ENCODE measurements at regions of chr12 and their contacts with region 1.

Region 1: GRCh38 chr12:64181504-64182291 is 40.4 kb downstream of the KICS2 start:
- DNase-seq: peak; percentile 99
- ATAC-seq: peak; percentile 86
- H3K4me3 ChIP-seq: peak overlapping the region; percentile 10; the same call in 1 of the 2 replicates
- H3K27ac ChIP-seq: peak overlapping the region; percentile 98
- H3K4me1 ChIP-seq: peaks cover 24% of the 10 kb centered on the region
- H3K27me3 ChIP-seq: no peaks in the 10 kb centered on the region
- CTCF ChIP-seq: peak; percentile 61
- POLR2A ChIP-seq: peak; percentile 63; the same call in 1 of the 2 replicates
- RAD21 ChIP-seq: peak; percentile 63

Region 2: DNA sequence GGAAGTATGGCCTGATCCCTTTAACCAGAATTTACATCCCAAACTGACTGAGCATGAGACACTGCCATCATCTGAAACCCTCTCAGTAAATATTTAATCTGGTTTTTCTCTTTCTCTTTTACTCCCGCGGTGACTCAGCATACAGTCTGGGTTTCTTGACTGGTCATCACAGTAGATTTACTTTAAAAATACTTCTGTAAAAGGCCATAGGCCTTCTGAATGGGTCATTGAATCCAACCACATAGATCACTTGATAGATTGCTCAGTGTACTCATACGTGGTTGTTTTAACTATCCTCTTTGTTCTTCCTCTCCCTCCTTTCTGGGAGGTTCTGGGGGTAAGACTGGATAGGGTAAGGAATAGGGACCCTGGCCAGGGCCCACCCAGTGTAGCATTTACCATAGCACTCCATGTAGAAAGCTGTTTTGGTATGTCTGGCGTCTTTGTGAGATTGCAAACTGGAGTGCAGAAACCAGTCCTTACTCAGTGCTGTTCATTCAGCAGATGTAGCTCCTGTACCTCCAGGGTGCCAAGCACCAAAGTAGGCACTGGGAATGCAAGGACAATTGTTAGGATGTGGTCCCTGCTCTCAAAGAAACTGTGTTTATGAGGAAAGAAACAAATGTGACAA is 171.5 kb before region 1 on chr12:
- CTCF ChIA-PET with region 1: interaction called, 3 read pairs
- POLR2A ChIA-PET with region 1: no interaction called
- dilution Hi-C with region 1: no loop called
- in situ Hi-C with region 1: no loop called
- intact Hi-C with region 1: loop called (anchors 10 kb)
- DNase-seq: peak; percentile 95
- ATAC-seq: peak; percentile 83
- H3K4me3 ChIP-seq: no peak overlapping the region
- H3K27ac ChIP-seq: peak overlapping the region; percentile 98
- H3K4me1 ChIP-seq: peaks cover 21% of the 10 kb centered on the region
- H3K27me3 ChIP-seq: no peaks in the 10 kb centered on the region
- CTCF ChIP-seq: 0 out of 2 replicates have a peak, but pooled peaks have one; percentile 8
- POLR2A ChIP-seq: no peak
- RAD21 ChIP-seq: peak; percentile 23

Region 3: DNA sequence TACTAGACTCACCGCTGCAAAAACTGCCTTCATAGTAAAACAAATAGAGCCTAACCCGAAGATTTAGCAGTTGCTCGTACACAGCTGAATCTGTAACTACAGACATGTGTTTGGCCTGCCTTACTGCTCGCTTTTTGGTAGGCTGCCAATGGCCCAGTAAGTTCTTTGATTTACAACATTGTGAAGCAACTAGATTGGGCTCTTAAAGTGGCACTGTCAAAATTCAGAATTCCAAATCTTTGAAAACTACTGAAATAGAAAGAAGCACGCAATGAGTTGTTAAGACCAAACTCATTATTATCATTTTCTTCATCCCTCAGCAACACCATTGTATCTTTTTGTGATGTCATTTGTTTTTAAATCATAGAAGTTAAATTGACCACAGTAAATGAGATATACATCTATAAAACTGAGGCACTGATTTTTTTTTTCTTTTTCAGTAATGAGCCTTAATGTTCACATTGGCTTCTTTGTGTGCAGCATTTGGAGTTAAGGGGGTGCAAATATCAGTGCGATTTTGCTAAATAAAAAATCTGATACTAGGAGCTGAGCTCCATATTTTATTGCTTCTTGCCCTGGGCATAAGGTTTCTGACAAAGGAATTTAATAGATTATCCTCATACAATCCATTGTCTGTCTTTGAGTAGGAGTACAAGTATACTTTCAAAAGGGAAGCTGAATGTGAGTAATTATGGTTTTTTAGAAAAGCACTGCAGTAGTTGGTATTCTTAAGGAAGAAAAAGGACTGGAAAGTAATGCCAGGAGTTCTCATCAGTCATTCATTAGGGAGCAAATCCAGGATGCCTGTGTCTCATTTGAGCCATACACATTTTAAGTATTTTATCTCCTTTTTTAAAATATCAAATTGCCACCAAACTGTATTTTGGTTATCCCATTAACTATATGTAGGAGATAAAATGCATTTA is 98.2 kb before region 1 on chr12:
- CTCF ChIA-PET with region 1: interaction called, 3 read pairs
- POLR2A ChIA-PET with region 1: no interaction called
- dilution Hi-C with region 1: no loop called
- in situ Hi-C with region 1: no loop called
- intact Hi-C with region 1: loop called (anchors 5 kb)
- DNase-seq: peak; percentile 95
- ATAC-seq: peak; percentile 69
- H3K4me3 ChIP-seq: no peak overlapping the region
- H3K27ac ChIP-seq: peak overlapping the region; percentile 26; the same call in 1 of the 2 replicates
- H3K4me1 ChIP-seq: peaks cover 21% of the 10 kb centered on the region
- H3K27me3 ChIP-seq: no peaks in the 10 kb centered on the region
- CTCF ChIP-seq: no peak
- POLR2A ChIP-seq: no peak
- RAD21 ChIP-seq: no peak

Region 4: GRCh38 chr12:64110864-64111263 is 70.8 kb before region 1 on chr12:
- CTCF ChIA-PET with region 1: interaction called, 3 read pairs
- POLR2A ChIA-PET with region 1: no interaction called
- dilution Hi-C with region 1: no loop called
- in situ Hi-C with region 1: no loop called
- intact Hi-C with region 1: loop called (anchors 2 kb)
- DNase-seq: peak; percentile 19
- ATAC-seq: peak; percentile 70
- H3K4me3 ChIP-seq: no peak overlapping the region
- H3K27ac ChIP-seq: no peak overlapping the region
- H3K4me1 ChIP-seq: peaks cover 6% of the 10 kb centered on the region
- H3K27me3 ChIP-seq: no peaks in the 10 kb centered on the region
- CTCF ChIP-seq: no peak
- POLR2A ChIP-seq: no peak
- RAD21 ChIP-seq: no peak

Region 5: GRCh38 chr12:64256166-64256800 is 74.6 kb after region 1 on chr12:
- CTCF ChIA-PET with region 1: interaction called, 3 read pairs
- POLR2A ChIA-PET with region 1: no interaction called
- dilution Hi-C with region 1: no loop called
- in situ Hi-C with region 1: no loop called
- intact Hi-C with region 1: loop called (anchors 5 kb)
- DNase-seq: peak; percentile 67
- ATAC-seq: peak; percentile 66
- H3K4me3 ChIP-seq: no peak overlapping the region
- H3K27ac ChIP-seq: no peak overlapping the region
- H3K4me1 ChIP-seq: peaks cover 3% of the 10 kb centered on the region; the same call in 1 of the 2 replicates
- H3K27me3 ChIP-seq: no peaks in the 10 kb centered on the region
- CTCF ChIP-seq: peak; percentile 89
- POLR2A ChIP-seq: no peak
- RAD21 ChIP-seq: peak; percentile 95